ENCODE measurements at regions of chr3 and their contacts with region 1.

Region 1: GRCh38 chr3:72855001-72855400 is 6.8 kb upstream of the SHQ1 start:
- DNase-seq: no peak
- H3K4me3 ChIP-seq: no peak overlapping the region
- H3K27ac ChIP-seq: no peak overlapping the region
- H3K4me1 ChIP-seq: no peaks in the 10 kb centered on the region
- H3K27me3 ChIP-seq: no peaks in the 10 kb centered on the region
- CTCF ChIP-seq: no peak
- POLR2A ChIP-seq: no peak

Region 2: DNA sequence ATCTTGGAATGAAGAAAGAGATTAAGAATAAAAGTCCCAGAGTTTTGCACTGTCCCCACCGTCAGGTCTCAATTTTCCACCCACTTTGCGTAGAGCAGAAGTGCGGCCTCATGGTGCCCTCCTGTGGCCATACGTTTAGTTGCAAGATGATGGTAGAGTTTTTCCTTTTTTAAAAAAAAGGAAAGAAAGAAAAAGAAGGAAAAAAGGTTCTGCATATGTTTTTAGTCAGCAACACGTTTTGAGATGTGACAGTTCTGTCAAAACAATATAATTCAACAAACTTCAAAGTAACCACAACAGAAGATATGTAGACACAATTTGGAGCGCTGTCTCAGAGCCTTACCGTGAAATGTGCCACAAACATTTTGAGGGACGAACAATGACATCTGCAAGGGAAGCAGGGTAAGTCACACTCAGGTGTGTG is 231.1 kb after region 1 on chr3:
- intact Hi-C with region 1: loop called (anchors 10 kb)
- DNase-seq: peak; percentile 44 to 53
- H3K4me3 ChIP-seq: no peak overlapping the region
- H3K27ac ChIP-seq: no peak overlapping the region
- H3K4me1 ChIP-seq: no peaks in the 10 kb centered on the region
- H3K27me3 ChIP-seq: no peaks in the 10 kb centered on the region
- CTCF ChIP-seq: peak; percentile 59 to 85 (median 74)
- POLR2A ChIP-seq: no peak

Measured in thyroid gland (tissue), 4 donors.